ENCODE measurements at regions of chr9 and their contacts with region 1.

Region 1: GRCh38 chr9:130770679-130771442 is 64.2 kb upstream of the ABL1 start:
- DNase-seq: peak; percentile 23
- H3K4me3 Mint-ChIP-seq: no peak overlapping the region
- H3K27ac Mint-ChIP-seq: no peak overlapping the region
- H3K4me1 Mint-ChIP-seq: peaks cover 26% of the 10 kb centered on the region
- H3K27me3 Mint-ChIP-seq: no peaks in the 10 kb centered on the region

Region 2: GRCh38 chr9:130860458-130861316 is 89.8 kb after region 1 on chr9:
- CTCF ChIA-PET with region 1: interaction called, 14 read pairs
- intact Hi-C with region 1: loop called (anchors 1 kb)
- DNase-seq: no peak
- H3K4me3 Mint-ChIP-seq: no peak overlapping the region
- H3K27ac Mint-ChIP-seq: no peak overlapping the region
- H3K4me1 Mint-ChIP-seq: no peaks in the 10 kb centered on the region
- H3K27me3 Mint-ChIP-seq: no peaks in the 10 kb centered on the region

Region 3: GRCh38 chr9:130866474-130866965 is 95.7 kb after region 1 on chr9:
- CTCF ChIA-PET with region 1: interaction called, 14 read pairs
- intact Hi-C with region 1: loop called (anchors 1 kb)
- DNase-seq: peak; percentile 79
- H3K4me3 Mint-ChIP-seq: no peak overlapping the region
- H3K27ac Mint-ChIP-seq: no peak overlapping the region
- H3K4me1 Mint-ChIP-seq: no peaks in the 10 kb centered on the region
- H3K27me3 Mint-ChIP-seq: no peaks in the 10 kb centered on the region

Region 4: GRCh38 chr9:130940693-130941576 is 170.1 kb after region 1 on chr9:
- CTCF ChIA-PET with region 1: no interaction called
- intact Hi-C with region 1: loop called (anchors 2 kb)
- DNase-seq: peak; percentile 87
- H3K4me3 Mint-ChIP-seq: no peak overlapping the region
- H3K27ac Mint-ChIP-seq: no peak overlapping the region
- H3K4me1 Mint-ChIP-seq: peaks cover 10% of the 10 kb centered on the region
- H3K27me3 Mint-ChIP-seq: peaks cover 52% of the 10 kb centered on the region